ENCODE measurements at regions of chr3 and their contacts with region 1.

Region 1: GRCh38 chr3:194046995-194047645 is 88.8 kb upstream of the HES1 start:
- DNase-seq: no peak
- ATAC-seq: no peak
- H3K4me3 ChIP-seq: no peak overlapping the region
- H3K27ac ChIP-seq: no peak overlapping the region
- H3K4me1 ChIP-seq: no peaks in the 10 kb centered on the region
- H3K27me3 ChIP-seq: no peaks in the 10 kb centered on the region
- CTCF ChIP-seq: no peak

Region 2: GRCh38 chr3:193872265-193872753 is 174.8 kb before region 1 on chr3:
- CTCF ChIA-PET with region 1: no interaction called
- POLR2A ChIA-PET with region 1: no interaction called
- in situ Hi-C with region 1: no loop called
- intact Hi-C with region 1: no loop called
- DNase-seq: peak; percentile 94
- ATAC-seq: peak; percentile 85
- H3K4me3 ChIP-seq: no peak overlapping the region
- H3K27ac ChIP-seq: peak overlapping the region; percentile 76
- H3K4me1 ChIP-seq: peaks cover 37% of the 10 kb centered on the region
- H3K27me3 ChIP-seq: no peaks in the 10 kb centered on the region
- CTCF ChIP-seq: no peak

Region 3: GRCh38 chr3:194087995-194088855 is 41.1 kb after region 1 on chr3:
- CTCF ChIA-PET with region 1: interaction called, 11 read pairs
- POLR2A ChIA-PET with region 1: no interaction called
- in situ Hi-C with region 1: no loop called
- intact Hi-C with region 1: no loop called
- DNase-seq: no peak
- ATAC-seq: no peak
- H3K4me3 ChIP-seq: no peak overlapping the region
- H3K27ac ChIP-seq: peak overlapping the region; percentile 81; the same call in 1 of the 2 replicates
- H3K4me1 ChIP-seq: peaks cover 27% of the 10 kb centered on the region
- H3K27me3 ChIP-seq: no peaks in the 10 kb centered on the region
- CTCF ChIP-seq: no peak

Measured in Panc1 (cell line).